ENCODE measurements at regions of chr12 and their contacts with region 1.

Region 1: GRCh38 chr12:95117178-95117599 is 43.8 kb upstream of the NR2C1 start:
- DNase-seq: peak in 1 of 2 experiments; percentile 48
- H3K4me3 ChIP-seq: peak overlapping the region; percentile 43; the same call in 1 of the 2 replicates
- H3K27ac ChIP-seq: peak overlapping the region; percentile 92
- H3K4me1 ChIP-seq: peaks cover 43% of the 10 kb centered on the region
- H3K27me3 ChIP-seq: no peaks in the 10 kb centered on the region
- CTCF ChIP-seq: peak; percentile 94

Region 2: DNA sequence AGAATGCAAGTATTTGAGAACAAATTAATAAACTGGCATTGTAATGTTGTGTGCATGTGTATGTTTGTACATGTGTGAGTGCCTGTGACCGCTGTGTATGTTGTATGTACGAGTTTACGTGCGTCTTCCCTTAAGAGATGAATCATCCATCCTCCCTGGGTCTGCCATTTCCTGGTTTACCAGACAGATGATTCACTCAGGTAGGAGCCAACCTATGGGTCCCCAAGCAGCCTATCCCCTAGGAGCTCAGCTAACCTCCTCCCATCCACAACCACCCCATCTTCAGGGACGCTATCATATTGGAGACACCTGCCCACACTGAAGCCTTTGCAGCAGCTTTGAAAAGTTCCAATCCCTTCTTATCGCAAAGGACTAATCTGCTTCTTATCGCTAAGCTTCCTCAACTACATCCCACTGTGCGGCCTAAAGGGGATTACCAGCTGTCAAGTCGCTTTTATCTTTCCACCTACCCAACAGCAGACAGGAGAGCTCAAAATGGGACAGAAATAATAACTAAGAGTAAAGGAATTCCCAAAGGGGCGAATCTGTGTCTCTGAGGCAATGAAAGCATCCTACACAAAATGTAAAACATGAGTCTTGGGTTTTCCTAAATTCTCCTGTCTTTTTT is 385.3 kb before region 1 on chr12:
- CTCF ChIA-PET with region 1: no interaction called
- POLR2A ChIA-PET with region 1: no interaction called
- intact Hi-C with region 1: no loop called
- DNase-seq: no peak
- H3K4me3 ChIP-seq: no peak overlapping the region
- H3K27ac ChIP-seq: no peak overlapping the region
- H3K4me1 ChIP-seq: no peaks in the 10 kb centered on the region
- H3K27me3 ChIP-seq: no peaks in the 10 kb centered on the region
- CTCF ChIP-seq: no peak

Region 3: DNA sequence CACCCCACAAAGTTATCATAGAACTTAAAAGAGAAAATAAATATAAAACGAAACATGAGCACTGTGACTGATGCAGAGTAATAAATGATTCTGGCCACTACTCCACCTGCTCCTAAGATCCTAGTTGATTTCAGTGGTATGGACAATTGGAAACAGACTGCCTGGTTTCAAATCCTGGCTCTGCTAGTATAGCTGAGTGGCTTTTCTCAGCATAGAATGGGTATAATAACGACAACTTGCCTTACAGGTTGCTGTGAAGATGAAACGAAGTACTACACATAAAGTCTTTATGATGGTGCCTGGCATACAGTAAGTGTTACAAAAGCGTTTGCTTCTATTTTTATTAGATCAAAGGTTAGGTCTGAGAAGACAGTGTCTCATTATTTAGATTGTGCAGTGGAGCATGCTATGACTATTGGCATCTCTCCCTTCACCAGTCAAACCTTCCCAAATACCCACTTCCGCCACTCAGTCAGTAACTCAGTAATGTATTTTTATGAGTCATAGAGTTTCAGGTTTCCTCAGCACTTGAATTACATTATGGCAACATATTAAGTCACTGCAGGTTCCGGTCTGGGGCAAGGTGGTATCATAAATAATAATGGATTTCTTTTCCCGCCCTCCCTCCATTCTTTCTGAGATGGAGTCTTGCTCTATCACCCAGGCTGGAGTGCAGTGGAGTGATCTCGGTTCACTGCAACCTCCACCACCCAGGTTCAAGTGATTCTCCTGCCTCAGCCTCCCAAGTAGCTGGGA is 14.1 kb before region 1 on chr12:
- CTCF ChIA-PET with region 1: no interaction called
- POLR2A ChIA-PET with region 1: interaction called, 9 read pairs
- intact Hi-C with region 1: loop called (anchors 2 kb)
- DNase-seq: peak; percentile 51 to 98
- H3K4me3 ChIP-seq: peak overlapping the region; percentile 33; the same call in 1 of the 2 replicates
- H3K27ac ChIP-seq: peak overlapping the region; percentile 88
- H3K4me1 ChIP-seq: peaks cover 64% of the 10 kb centered on the region
- H3K27me3 ChIP-seq: no peaks in the 10 kb centered on the region
- CTCF ChIP-seq: no peak

Region 4: GRCh38 chr12:95318071-95318545 is 200.9 kb after region 1 on chr12:
- CTCF ChIA-PET with region 1: no interaction called
- POLR2A ChIA-PET with region 1: no interaction called
- intact Hi-C with region 1: loop called (anchors 5 kb)
- DNase-seq: peak; percentile 29 to 97
- H3K4me3 ChIP-seq: no peak overlapping the region
- H3K27ac ChIP-seq: peak overlapping the region; percentile 89
- H3K4me1 ChIP-seq: peaks cover 49% of the 10 kb centered on the region
- H3K27me3 ChIP-seq: no peaks in the 10 kb centered on the region
- CTCF ChIP-seq: no peak

Region 5: DNA sequence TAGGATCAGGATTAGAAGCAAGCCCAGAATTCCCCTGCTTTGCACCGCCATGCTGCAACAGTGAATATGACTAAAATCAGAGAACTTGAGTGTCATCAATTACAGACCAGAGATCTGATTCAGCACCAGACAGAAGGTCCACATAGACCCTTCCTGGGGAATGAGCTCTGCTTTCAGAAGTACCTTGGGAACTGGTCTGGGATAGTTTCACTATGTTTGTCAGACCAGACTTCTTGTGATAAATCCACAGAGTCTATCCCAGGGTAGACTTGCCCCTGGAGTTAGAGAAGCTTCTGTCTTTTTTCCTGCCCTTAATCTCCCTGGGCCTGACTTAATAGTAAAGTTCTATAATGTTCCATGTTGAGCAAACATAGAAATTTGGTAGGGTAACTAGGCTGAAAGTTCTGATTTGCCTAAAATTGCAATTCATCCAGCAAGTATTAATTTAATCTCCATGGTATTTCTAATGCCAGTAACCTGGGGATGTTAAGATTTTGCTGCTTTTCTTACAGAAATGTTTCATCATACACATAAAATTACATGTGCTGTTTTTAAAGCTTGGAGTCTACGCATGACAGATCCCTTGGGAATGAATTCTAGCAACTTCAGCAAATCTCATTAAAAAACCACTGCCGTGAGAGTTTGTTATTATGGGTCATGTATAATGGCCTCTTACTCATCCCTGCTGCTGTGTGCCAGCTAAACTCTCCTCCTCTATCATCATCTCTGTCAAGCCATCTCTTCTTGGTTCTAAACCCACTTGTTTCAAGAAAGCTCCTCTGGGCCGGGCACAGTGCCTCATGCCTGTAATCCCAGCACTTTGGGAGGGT is 295.5 kb after region 1 on chr12:
- CTCF ChIA-PET with region 1: no interaction called
- POLR2A ChIA-PET with region 1: no interaction called
- intact Hi-C with region 1: no loop called
- DNase-seq: peak in 1 of 2 experiments; percentile 58
- H3K4me3 ChIP-seq: no peak overlapping the region
- H3K27ac ChIP-seq: 0 out of 2 replicates have a peak overlapping the region, but pooled peaks have one; percentile 13
- H3K4me1 ChIP-seq: no peaks in the 10 kb centered on the region
- H3K27me3 ChIP-seq: no peaks in the 10 kb centered on the region
- CTCF ChIP-seq: no peak

Region 6: DNA sequence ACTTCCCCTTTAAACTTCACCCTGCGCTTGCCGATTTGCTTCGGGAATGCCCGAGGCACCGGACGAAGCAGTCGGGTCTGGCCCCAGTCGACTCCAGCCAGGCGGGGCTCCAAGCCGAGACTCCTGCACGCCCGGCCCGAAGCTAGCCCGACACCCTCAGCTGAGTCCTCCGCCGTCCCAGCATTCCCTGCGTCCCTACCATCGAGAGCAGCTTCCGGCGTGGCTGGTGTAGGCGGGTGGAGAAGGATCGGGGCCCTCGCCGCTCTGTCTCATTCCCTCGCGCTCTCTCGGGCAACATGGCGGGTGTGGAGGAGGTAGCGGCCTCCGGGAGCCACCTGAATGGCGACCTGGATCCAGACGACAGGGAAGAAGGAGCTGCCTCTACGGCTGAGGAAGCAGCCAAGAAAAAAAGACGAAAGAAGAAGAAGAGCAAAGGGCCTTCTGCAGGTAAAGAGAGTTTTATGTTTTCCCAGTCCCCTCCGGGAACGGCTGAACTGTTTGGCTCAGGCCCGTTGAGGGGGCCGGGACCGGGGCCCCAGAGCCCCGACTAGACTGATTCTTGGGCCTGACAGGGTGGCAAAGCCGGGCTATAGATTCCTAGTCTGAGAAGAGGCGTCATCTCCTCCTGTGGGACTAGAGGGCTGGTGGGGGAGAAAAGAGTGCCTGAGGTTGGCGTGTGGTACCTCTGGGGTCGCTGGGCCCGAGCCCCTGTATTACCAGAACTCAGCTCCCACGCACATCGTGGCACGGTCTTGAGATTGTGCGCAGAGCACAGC is 356.9 kb after region 1 on chr12 and contains the start of gene METAP2:
- CTCF ChIA-PET with region 1: interaction called, 3 read pairs
- POLR2A ChIA-PET with region 1: no interaction called
- intact Hi-C with region 1: loop called (anchors 2 kb)
- DNase-seq: peak; percentile 91 to 96
- H3K4me3 ChIP-seq: peak within 1 kb of the TSS; percentile 94
- H3K27ac ChIP-seq: peak within 1 kb of the TSS; percentile 78
- H3K4me1 ChIP-seq: peaks cover 20% of the 10 kb centered on the region
- H3K27me3 ChIP-seq: no peaks in the 10 kb centered on the region
- CTCF ChIP-seq: no peak
- total RNA-seq, gene METAP2: 74.4 and 93.8 TPM in 2 replicates